Activated CD4-positive, alpha-beta T cell treated with anti-CD3 and anti-CD28 coated beads for 36 hours (primary cell): ENCODE measurements at regions of chr1 and their contacts with region 1.

Region 1: DNA sequence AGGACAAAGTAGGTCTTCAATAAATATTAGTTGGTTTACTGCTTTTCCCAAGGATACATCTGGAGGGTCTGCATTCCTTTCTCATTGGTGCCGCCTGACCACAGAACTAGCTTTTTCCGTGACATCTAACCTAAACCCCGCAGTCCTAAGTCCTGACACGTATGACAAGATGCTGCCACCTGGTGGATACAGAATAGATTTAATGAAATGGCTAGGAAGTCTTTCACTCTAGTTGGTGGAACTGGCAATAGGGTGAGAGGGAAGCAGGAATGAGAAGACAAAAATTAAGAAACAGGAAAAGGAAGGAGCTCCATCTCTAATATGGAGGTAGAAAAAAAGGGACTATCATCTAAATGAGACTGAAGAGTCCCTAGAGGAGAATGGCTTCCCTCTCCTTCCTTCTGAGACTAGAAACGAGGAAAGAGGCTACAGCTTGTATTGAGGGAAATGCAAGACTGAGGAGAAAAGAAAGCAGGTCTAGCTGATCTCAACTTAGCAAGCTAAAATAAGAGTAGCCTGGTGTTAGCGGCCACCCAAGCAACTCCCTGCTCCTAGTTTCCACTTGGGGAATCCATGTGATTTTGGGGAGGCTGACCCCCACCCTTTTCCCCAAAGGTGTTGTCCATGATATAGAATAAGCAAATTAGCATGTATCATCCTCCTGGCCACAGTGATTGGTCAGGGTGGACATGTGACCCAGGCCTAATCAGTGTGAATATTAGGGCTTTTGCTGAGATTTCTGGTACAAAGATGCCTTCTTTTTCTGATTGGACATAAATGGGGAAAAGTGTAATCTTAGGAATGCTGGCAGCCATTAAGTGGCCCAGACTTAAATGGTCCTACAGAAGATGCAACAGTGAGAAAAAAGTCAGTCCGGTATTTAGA is 5.9 kb downstream of the RFX5 start:
- DNase-seq: peak; percentile 65
- ATAC-seq: peak; percentile 91
- H3K4me3 Mint-ChIP-seq: no peak overlapping the region
- H3K27ac Mint-ChIP-seq: peak overlapping the region; percentile 39
- H3K4me1 Mint-ChIP-seq: peaks cover 24% of the 10 kb centered on the region
- H3K27me3 Mint-ChIP-seq: no peaks in the 10 kb centered on the region

Region 2: DNA sequence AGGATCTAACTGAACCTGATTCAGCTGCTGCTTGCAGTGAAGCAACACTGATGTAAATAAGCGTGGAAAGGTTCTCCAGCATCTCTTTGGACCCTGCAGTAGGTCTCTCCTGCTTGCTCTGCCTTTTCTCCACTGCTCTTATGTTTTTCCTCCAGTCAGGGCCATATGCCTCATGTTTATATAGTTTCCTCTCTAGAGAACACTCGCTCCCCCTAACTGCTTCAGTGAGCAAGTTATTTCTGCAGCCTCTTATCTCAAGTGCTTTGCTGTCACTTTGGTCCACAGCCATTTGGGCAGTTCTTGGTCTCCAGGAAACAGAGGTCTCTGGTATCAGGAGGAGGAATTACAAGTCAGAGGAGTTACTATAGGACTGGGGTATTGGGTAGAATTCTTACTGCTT is 327.6 kb before region 1 on chr1:
- CTCF ChIA-PET with region 1: no interaction called
- POLR2A ChIA-PET with region 1: no interaction called
- intact Hi-C with region 1: no loop called
- DNase-seq: no peak
- ATAC-seq: no peak
- H3K4me3 Mint-ChIP-seq: no peak overlapping the region
- H3K27ac Mint-ChIP-seq: no peak overlapping the region
- H3K4me1 Mint-ChIP-seq: peaks cover 29% of the 10 kb centered on the region
- H3K27me3 Mint-ChIP-seq: no peaks in the 10 kb centered on the region

Region 3: DNA sequence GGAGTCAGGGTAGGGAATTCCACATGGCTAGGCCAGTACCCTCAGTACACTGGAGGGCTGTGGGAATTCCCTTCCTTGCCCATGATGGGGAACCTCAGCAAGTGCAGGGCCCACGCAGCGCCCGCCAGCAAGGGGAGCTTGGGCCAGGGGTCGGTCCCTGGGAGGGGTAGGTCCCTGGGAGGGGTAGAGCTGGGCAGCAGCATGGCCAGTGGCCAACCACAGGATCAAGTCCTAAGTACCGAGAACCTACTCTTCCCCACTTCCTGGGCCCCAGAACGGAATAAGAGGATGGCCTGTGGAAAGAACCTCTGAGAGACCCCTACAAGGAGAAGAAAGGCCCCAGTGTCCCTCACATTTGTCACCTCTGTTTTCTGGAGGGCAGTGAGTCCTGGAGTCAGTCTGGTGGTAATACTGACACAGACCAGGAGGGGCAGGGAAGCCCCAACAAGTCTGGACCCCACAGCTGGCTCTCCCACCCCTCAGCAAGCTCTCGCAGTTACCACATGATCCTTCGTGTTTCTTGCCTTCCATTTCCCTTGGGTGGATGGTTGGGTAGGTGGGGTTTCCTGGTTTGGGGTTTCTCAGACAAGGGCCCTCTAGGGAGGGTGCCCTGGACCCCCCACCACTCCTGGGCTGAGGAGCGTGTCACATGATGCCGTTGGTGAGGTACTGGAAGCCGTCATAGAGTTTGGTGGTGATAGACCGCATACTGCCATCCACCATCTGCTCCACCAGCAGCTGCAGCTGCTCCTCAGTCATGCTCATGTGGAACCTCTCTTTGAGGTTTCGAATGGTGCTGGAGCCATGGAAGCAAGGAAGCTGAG is 48.7 kb before region 1 on chr1:
- CTCF ChIA-PET with region 1: interaction called, 53 read pairs
- POLR2A ChIA-PET with region 1: interaction called, 3 read pairs
- intact Hi-C with region 1: no loop called
- DNase-seq: no peak
- ATAC-seq: peak; percentile 34
- H3K4me3 Mint-ChIP-seq: no peak overlapping the region
- H3K27ac Mint-ChIP-seq: peak overlapping the region; percentile 55
- H3K4me1 Mint-ChIP-seq: no peaks in the 10 kb centered on the region
- H3K27me3 Mint-ChIP-seq: no peaks in the 10 kb centered on the region

Region 4: GRCh38 chr1:151352006-151352689 is 11.0 kb after region 1 on chr1:
- CTCF ChIA-PET with region 1: interaction called, 14 read pairs
- POLR2A ChIA-PET with region 1: no interaction called
- intact Hi-C with region 1: no loop called
- DNase-seq: no peak
- ATAC-seq: no peak
- H3K4me3 Mint-ChIP-seq: no peak overlapping the region
- H3K27ac Mint-ChIP-seq: no peak overlapping the region
- H3K4me1 Mint-ChIP-seq: peaks cover 10% of the 10 kb centered on the region
- H3K27me3 Mint-ChIP-seq: no peaks in the 10 kb centered on the region

Region 5: DNA sequence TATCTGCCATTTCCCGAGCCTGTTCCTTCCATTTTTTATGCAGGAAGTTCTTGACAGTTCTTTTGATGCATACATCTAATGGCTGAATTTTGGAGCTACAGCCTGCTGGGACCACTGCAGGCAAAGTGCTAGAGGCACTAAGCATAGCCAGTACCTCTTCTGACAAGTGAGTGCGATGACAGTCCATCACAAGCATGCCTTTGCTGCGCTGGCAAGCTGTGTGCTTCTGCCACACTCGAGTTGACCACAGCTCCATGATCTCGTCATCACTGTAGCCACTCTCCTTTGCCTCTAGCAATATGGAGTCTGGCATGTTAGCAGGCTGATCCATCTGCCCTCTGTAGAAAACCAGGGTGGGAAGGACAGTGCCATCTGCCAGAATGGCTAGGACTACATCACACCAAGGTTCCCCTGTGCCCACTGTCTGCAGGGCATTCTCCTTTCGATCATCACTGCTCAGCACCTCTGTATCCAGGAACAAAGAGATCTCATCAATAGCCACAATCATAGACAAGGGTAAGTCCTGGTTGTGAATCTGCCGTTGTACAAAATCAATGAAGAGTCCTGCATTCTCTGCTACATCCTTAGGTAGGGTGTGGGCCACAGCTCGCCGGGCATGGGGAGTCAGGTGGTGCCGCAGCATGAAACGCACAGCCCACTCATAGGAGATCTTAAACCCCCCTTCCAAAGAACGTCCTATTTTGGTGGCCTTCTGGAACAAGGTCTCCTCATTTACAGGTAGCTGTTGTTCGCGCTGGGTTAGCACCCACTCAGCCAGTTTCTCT is 64.2 kb after region 1 on chr1:
- CTCF ChIA-PET with region 1: interaction called, 12 read pairs
- POLR2A ChIA-PET with region 1: no interaction called
- intact Hi-C with region 1: no loop called
- DNase-seq: no peak
- ATAC-seq: no peak
- H3K4me3 Mint-ChIP-seq: no peak overlapping the region
- H3K27ac Mint-ChIP-seq: peak overlapping the region; percentile 28
- H3K4me1 Mint-ChIP-seq: peaks cover 18% of the 10 kb centered on the region
- H3K27me3 Mint-ChIP-seq: no peaks in the 10 kb centered on the region